ENCODE measurements at regions of chr3 and their contacts with region 1.

Region 1: DNA sequence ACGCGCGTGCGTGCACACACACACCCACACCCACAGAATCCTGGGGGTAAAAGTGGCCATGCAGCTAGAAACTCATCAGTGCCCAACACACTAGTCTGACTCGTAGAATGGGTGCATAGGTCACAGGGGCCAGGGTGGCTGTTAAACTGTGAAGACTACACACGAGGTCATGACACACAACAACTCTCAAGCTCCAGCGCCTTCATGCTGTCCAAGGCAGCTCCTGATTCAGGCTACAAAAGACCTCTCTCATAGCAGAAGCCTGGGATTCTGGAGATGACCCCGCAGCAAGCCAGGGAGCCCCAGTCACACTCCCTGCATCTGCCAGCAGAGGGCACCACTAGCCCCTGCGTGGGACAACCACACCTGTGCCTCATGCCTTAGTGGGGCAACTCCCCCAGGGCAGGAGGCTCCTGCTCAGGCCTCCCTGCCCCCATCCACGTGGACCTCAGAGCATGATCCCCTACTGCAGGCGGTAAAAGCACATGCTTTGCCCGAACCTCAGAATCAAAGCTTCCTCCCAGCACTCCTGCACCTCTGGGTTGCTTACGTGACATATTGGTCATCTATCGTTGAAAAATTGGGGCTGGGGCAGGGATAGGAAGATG is 93.1 kb downstream of the LRIG1 start:
- DNase-seq: peak; percentile 91
- H3K4me3 ChIP-seq: no peak overlapping the region
- H3K27ac ChIP-seq: no peak overlapping the region
- H3K4me1 ChIP-seq: peaks cover 0 to 6% (median 0%) of the 10 kb centered on the region in 6 donors
- H3K27me3 ChIP-seq: no peaks in the 10 kb centered on the region
- CTCF ChIP-seq: peak; percentile 56 to 93 (median 88)
- POLR2A ChIP-seq: no peak

Region 2: DNA sequence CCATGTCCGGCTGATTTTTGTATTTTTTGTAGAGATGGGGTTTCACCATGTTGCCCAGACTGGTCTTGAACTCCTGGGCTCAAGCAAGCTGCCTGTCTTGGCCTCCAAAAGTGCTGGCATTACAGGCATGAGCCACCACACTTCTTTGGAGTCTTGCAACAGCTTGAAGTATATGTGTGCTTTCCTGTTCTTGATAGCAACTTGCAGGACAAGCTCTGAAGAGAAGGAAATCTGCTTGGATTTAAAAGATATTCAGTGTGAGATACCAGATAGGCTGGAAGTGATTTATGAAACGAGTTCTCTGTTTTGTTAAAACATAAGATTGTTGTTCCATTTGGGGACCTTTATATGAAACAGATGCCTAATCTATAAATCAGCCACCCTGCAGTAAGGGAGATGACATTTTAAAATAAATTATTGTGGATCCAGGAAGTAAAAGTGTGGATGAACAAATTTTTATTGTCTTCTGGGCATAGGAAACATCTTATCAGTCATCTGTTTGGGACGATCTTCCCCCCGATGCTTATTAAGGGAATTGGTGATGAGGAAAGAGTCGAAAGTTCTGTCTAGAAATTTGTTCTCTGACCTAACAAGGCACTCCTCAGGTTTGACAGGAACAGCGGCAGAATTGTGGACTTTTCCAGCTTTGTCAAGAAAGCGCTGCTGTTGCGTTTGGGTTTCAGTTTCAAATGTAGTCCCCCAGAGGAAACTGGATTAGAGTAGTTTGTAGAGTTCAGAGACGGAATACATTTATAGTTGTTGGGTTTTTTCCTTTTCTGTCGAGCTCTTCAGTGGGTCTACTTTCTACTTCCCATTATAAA is 315.3 kb before region 1 on chr3:
- intact Hi-C with region 1: no loop called
- DNase-seq: no peak
- H3K4me3 ChIP-seq: no peak overlapping the region
- H3K27ac ChIP-seq: no peak overlapping the region
- H3K4me1 ChIP-seq: no peaks in the 10 kb centered on the region
- H3K27me3 ChIP-seq: no peaks in the 10 kb centered on the region
- CTCF ChIP-seq: no peak
- POLR2A ChIP-seq: no peak

Region 3: GRCh38 chr3:66378256-66378823 is 29.4 kb before region 1 on chr3:
- intact Hi-C with region 1: no loop called
- DNase-seq: no peak
- H3K4me3 ChIP-seq: no peak overlapping the region
- H3K27ac ChIP-seq: peak overlapping the region in 3 of 8 donors; percentile 41 to 46 (median 46)
- H3K4me1 ChIP-seq: no peaks in the 10 kb centered on the region
- H3K27me3 ChIP-seq: no peaks in the 10 kb centered on the region
- CTCF ChIP-seq: peak in 6 of 11 experiments; percentile 23 to 44 (median 40)
- POLR2A ChIP-seq: no peak

Region 4: DNA sequence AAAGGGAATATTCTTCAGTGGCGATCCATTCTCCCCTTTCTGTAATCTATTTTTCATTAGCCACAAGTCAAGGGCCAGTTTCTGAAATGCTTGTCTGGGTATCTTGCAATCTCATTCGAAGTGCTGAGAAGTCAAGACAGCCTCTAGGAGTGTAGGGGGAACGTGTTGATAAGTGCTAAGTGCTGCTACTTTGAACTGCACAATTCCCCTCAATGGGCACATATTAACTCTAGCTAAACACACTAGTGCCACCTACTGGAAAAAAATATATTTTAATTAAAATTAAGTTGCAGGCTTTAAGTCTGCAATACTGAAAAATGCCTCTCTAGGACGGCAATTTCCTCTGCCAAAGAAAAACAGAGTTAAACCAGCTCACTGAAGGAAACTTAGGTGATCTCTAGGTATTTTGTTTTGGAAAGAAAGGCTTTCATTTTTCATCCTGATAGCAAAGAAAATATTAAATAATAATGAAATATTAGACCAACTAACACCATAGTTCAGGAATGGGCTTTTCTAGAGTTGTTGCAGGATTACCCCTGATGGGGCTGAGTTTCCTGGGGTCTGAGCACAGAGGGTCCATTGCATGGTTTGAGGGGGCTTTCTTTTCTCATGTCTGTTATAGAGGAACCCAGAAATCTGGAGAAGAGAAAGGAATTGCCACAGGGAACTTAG is 408.5 kb after region 1 on chr3:
- intact Hi-C with region 1: loop called (anchors 5 kb)
- DNase-seq: no peak
- H3K4me3 ChIP-seq: no peak overlapping the region
- H3K27ac ChIP-seq: no peak overlapping the region
- H3K4me1 ChIP-seq: peaks cover 0 to 7% (median 0%) of the 10 kb centered on the region in 6 donors
- H3K27me3 ChIP-seq: no peaks in the 10 kb centered on the region
- CTCF ChIP-seq: peak in 10 of 11 experiments; percentile 7 to 56 (median 44)
- POLR2A ChIP-seq: no peak

Measured in spleen (tissue), 13 donors.